Activated CD4-positive, alpha-beta T cell treated with anti-CD3 and anti-CD28 coated beads, Interleukin-2, amount 10 ng/mL, durations not matched to agents 24 days and 14 days (primary cell): ENCODE measurements at regions of chr2 and their contacts with region 1.

Region 1: GRCh38 chr2:37585982-37586621 is 85.3 kb downstream of the CDC42EP3 start:
- DNase-seq: peak; percentile 88
- H3K4me3 Mint-ChIP-seq: peak overlapping the region; percentile 52
- H3K27ac Mint-ChIP-seq: peak overlapping the region; percentile 76
- H3K4me1 Mint-ChIP-seq: peaks cover 66% of the 10 kb centered on the region
- H3K27me3 Mint-ChIP-seq: no peaks in the 10 kb centered on the region

Region 2: GRCh38 chr2:37354531-37354930 is 231.6 kb before region 1 on chr2:
- intact Hi-C with region 1: no loop called
- DNase-seq: no peak
- H3K4me3 Mint-ChIP-seq: no peak overlapping the region
- H3K27ac Mint-ChIP-seq: no peak overlapping the region
- H3K4me1 Mint-ChIP-seq: no peaks in the 10 kb centered on the region
- H3K27me3 Mint-ChIP-seq: peaks cover 65% of the 10 kb centered on the region

Region 3: GRCh38 chr2:37365669-37366068 is 220.4 kb before region 1 on chr2:
- intact Hi-C with region 1: loop called (anchors 5 kb)
- DNase-seq: peak; percentile 61
- H3K4me3 Mint-ChIP-seq: no peak overlapping the region
- H3K27ac Mint-ChIP-seq: no peak overlapping the region
- H3K4me1 Mint-ChIP-seq: peaks cover 13% of the 10 kb centered on the region
- H3K27me3 Mint-ChIP-seq: peaks cover 33% of the 10 kb centered on the region

Region 4: DNA sequence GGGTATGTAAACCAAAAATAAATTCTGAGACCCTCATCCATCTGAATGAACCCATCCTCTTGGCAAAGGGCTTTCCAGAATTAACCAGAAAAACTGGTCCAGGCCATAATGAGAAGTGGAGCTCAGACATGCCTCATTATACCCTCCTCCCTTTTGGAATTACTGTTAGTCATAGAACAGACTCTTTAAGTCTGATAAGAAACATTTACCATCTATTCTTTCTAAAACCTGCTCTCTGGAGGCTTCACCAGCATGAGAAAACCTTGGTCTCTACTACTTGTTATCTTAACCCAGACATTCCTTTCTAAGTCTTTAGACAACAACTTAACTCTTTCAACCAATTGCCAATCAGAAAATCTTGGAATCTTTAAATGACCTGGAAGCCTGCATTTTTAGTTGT is 158.9 kb before region 1 on chr2:
- intact Hi-C with region 1: no loop called
- DNase-seq: no peak
- H3K4me3 Mint-ChIP-seq: no peak overlapping the region
- H3K27ac Mint-ChIP-seq: no peak overlapping the region
- H3K4me1 Mint-ChIP-seq: no peaks in the 10 kb centered on the region
- H3K27me3 Mint-ChIP-seq: peaks cover 24% of the 10 kb centered on the region

Region 5: DNA sequence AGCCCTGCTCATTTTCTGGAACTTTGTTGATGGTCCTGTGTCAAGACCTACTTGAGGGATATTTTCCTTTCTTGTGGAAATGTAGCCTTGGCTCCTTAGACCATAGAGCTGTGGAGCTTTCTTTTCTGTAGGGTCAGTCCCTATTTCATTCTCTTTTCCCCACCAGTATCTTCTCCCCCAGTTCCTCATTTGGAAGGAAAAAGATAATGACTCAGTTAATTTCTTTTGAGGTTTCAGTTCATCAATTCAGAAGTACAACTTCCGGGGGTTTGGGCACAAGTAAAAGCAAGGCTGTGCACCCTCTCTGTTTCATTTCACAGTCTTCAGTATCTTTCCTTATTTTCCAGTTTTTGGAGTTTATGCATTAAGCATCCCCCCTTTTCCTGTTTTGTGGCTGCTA is 14.6 kb after region 1 on chr2:
- intact Hi-C with region 1: loop called (anchors 2 kb)
- DNase-seq: no peak
- H3K4me3 Mint-ChIP-seq: peak overlapping the region; percentile 61
- H3K27ac Mint-ChIP-seq: no peak overlapping the region
- H3K4me1 Mint-ChIP-seq: peaks cover 43% of the 10 kb centered on the region
- H3K27me3 Mint-ChIP-seq: peaks cover 7% of the 10 kb centered on the region

Region 6: DNA sequence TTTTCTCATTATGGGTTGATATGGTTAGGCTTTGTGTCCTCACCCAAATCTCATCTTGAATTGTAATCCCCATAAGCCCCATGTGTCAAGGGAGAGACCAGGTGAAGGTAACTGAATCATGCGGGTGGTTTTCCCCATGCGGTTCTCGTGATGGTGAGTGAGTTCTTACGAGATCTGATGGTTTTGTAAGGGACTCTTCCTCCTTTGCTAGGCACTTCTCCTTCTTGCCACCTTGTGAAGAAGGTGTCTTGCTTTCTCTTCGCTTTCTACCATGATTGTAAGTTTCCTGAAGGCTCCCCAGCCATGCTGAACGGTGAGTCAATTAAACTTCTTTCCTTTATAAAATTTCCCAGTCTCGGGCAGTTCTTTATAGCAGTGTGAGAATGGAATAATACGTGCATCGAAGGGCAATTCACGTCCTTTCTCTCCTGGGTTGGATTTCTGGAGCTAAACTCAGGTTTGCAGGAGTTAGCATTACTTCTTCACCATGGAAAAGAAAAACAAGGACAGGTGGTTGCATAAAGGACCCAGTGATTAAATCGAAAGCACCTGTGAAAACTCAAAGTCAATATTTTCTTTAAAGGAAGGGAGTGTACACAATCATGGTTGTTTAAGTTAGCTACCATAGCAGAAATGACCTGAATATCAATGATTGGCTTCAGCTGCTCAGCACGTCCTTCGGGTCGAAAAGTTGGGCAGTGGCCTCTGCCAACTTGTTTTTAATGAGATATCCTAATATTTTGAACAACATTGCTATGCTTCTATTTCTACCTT is 31.2 kb after region 1 on chr2:
- intact Hi-C with region 1: no loop called
- DNase-seq: no peak
- H3K4me3 Mint-ChIP-seq: no peak overlapping the region
- H3K27ac Mint-ChIP-seq: no peak overlapping the region
- H3K4me1 Mint-ChIP-seq: peaks cover 28% of the 10 kb centered on the region
- H3K27me3 Mint-ChIP-seq: peaks cover 5% of the 10 kb centered on the region

Region 7: DNA sequence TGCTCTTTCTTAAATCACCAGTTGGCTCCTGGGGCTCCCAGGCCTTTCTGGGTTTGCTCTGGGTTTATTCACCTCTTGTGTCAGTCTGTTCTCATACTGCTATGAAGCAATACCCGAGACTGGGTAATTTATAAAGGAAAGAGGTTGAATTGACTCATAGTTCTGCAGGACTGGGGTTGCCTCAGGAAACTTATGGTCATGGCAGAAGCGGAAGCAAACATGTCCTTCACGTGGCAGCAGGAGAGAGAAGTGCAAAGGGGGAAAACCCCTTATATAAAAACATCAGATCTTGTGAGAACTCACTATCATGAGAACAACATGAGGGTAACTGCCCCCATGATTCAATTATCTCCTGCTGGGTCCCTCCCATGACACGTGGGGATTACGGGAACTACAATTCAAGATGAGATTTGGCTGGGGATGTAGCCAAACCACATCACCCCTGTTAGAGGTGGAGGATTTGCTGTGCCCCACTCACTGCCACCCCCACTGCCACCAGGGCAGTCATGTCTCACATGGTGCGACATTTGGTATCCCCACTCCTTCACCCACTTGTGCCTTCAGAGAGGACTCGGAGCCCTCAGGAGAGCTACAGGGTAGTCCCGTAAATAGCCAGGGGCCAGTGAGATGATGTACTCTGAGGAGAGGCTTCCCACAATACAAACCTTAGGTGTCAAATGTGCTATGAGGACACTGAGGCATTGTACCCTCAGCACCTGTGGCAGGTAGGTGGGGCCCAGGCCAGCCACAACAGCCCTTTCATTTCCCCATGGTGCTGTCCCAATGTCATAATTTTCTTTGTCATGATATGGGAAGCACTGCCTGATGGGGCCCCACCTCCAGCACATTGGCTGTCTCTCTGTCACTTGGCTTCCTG is 49.6 kb after region 1 on chr2:
- intact Hi-C with region 1: loop called (anchors 1 kb)
- DNase-seq: peak; percentile 89
- H3K4me3 Mint-ChIP-seq: peak overlapping the region; percentile 46
- H3K27ac Mint-ChIP-seq: peak overlapping the region; percentile 83
- H3K4me1 Mint-ChIP-seq: peaks cover 31% of the 10 kb centered on the region
- H3K27me3 Mint-ChIP-seq: peaks cover 13% of the 10 kb centered on the region

Region 8: DNA sequence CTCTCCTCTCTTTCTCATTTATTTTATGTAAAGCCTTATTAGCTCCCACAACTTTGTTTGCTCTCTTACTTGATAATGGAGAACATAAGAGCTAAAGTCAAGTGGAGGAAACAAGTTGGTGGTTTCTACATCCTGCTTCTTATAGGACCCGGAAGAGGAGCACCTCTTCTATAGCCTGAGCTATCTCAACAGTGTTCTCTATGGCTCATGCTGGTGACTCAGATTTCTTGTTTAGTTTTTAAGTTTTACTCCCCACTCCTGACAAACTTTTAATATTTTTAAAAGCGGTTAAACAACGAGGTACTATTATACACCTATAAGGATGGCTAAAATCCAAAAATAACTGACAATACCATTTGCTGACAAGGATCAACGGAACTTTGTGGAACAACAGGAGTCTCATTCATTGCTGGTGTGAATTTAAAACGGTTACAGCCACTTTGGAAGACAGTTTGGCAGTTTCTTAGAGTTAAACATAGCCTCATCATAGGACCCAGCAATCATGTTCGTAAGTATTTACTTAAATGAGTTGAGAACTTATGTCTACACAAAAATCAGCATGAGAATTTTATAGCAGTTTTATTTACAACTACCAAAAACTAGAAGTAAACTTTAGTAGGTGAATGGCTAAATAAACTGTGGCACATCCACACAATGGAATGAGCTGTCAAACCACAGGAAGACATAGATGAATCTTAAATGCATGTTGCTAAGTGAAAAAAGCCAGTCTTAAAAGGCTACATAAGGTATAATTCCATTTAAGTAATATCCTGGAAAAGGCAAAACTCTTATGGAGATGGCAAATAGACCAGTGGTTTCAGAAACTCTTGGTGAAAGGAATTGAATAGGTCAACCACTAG is 98.0 kb after region 1 on chr2:
- intact Hi-C with region 1: loop called (anchors 1 kb)
- DNase-seq: peak; percentile 72
- H3K4me3 Mint-ChIP-seq: peak overlapping the region; percentile 46
- H3K27ac Mint-ChIP-seq: peak overlapping the region; percentile 81
- H3K4me1 Mint-ChIP-seq: peaks cover 22% of the 10 kb centered on the region
- H3K27me3 Mint-ChIP-seq: peaks cover 3% of the 10 kb centered on the region

Region 9: GRCh38 chr2:37740164-37740739 is 154.2 kb after region 1 on chr2:
- intact Hi-C with region 1: no loop called
- DNase-seq: no peak
- H3K4me3 Mint-ChIP-seq: no peak overlapping the region
- H3K27ac Mint-ChIP-seq: no peak overlapping the region
- H3K4me1 Mint-ChIP-seq: no peaks in the 10 kb centered on the region
- H3K27me3 Mint-ChIP-seq: peaks cover 3% of the 10 kb centered on the region

Region 10: DNA sequence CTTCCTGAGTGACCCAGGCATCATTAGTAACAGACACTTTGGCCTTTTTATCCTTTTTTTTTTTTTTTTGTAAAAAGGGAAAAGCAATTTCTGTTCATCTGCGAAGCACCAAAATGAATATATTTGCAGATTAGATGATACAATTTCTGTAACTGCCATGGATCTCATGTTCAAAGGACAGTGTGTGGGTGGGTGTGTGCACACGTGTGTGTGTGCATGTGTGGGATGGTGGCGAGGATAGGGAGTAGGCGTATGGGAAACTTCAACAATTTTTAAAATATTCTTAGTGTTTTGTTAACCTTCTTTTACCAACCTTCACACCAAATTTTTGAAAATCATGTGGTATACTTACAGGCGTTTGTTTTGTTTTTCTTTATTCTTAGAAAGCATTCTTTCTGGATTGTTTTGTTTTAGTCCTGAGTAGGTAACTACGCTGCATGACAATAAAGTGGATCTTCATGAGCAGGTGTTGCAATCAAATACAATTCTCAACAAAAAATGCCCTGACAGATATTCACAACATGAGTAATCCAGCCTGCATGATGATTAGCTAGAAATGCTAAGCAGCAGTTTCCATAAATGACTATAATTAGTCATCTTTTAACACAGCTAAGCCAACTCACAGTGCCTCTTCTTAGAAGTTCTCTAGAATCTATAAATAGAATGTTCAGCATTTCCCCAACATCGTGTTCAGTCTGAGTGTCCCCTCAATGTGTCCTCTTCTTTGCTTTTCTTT is 285.5 kb after region 1 on chr2:
- intact Hi-C with region 1: loop called (anchors 2 kb)
- DNase-seq: no peak
- H3K4me3 Mint-ChIP-seq: peak overlapping the region; percentile 69
- H3K27ac Mint-ChIP-seq: peak overlapping the region; percentile 94
- H3K4me1 Mint-ChIP-seq: peaks cover 45% of the 10 kb centered on the region
- H3K27me3 Mint-ChIP-seq: peaks cover 2% of the 10 kb centered on the region